ENCODE measurements at regions of chr20 and their contacts with region 1.

Region 1: DNA sequence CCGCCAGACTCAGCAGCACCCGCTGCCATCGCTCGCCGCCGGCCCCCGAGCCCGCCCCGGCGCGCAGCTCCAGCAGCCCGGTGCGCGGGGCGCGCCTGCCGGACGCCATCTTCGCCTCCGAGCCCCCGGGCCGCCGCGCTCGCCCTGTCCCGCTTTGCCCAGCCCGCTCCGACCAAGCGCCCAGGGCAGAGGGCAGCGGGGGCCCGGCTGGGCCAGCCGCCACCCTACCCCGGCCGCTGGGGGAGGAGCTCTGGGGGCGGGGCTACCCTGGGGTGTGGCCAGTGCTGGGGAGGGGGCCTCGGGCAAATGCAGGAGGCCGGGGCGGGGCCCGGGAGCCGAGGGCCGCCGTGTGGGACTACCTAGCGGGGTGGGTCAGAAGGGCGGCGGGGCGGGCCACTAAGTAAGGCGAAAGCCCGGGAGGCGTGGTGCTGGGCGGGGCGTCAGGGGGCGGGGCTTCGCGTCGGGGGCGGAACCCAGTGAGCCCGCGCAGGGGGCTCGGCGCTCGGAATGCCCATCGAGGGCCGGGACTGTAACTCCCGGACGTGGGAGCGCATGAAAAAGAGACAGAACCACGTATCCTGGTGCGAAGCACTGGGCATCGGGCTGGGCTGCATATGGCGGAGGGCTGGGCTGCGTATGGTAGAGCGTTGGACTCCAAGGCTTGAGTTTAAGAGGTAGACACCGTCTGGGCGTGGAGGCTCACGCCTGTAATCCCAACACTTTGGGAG is at the start of gene SNTA1:
- DNase-seq: peak; percentile 96 to 98 (median 98)
- ATAC-seq: peak; percentile 96
- H3K4me3 ChIP-seq: peak within 1 kb of the TSS; percentile 78
- H3K27ac ChIP-seq: peak within 1 kb of the TSS; percentile 76
- H3K4me1 ChIP-seq: peaks cover 34 to 38% of the 10 kb centered on the region in 2 experiments; a peak in 4 of 5 replicates
- H3K27me3 ChIP-seq: no peaks in the 10 kb centered on the region
- CTCF ChIP-seq: no peak
- EP300 ChIP-seq: no peak
- POLR2A ChIP-seq: peak; percentile 44; the same call in 1 of the 2 replicates
- RAD21 ChIP-seq: no peak
- polyA plus RNA-seq, gene SNTA1: 1.2 to 2.0 TPM

Region 2: DNA sequence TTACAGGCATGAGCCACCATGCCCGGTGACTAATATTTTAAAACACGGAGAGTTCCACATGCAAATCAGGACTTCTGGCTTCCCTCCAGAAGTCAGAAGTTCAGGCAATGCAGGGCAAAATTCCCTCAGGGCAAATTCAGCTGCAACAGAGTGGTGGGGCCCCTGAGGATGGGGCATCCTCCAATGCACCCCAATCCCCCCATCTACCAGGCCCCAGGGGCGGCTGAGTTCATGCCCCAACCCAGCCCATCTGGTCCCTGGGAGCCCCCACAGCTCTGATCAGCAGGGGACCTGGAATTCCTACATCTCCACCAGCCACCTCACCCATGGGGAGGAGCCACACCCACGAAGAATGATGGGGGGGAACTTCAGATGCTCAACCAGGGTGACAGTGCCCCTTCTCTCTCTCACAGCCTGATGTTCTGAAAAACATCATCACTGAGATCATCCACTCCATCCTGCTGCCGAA is 138.1 kb before region 1 on chr20:
- CTCF ChIA-PET with region 1: no interaction called
- POLR2A ChIA-PET with region 1: no interaction called
- in situ Hi-C with region 1: no loop called
- intact Hi-C with region 1: no loop called
- DNase-seq: no peak
- ATAC-seq: no peak
- H3K4me3 ChIP-seq: no peak overlapping the region
- H3K27ac ChIP-seq: no peak overlapping the region
- H3K4me1 ChIP-seq: no peaks in the 10 kb centered on the region
- H3K27me3 ChIP-seq: peaks cover 8 to 48% of the 10 kb centered on the region in 2 experiments; a peak in 4 of 5 replicates
- CTCF ChIP-seq: no peak
- EP300 ChIP-seq: no peak
- POLR2A ChIP-seq: no peak
- RAD21 ChIP-seq: no peak

Region 3: DNA sequence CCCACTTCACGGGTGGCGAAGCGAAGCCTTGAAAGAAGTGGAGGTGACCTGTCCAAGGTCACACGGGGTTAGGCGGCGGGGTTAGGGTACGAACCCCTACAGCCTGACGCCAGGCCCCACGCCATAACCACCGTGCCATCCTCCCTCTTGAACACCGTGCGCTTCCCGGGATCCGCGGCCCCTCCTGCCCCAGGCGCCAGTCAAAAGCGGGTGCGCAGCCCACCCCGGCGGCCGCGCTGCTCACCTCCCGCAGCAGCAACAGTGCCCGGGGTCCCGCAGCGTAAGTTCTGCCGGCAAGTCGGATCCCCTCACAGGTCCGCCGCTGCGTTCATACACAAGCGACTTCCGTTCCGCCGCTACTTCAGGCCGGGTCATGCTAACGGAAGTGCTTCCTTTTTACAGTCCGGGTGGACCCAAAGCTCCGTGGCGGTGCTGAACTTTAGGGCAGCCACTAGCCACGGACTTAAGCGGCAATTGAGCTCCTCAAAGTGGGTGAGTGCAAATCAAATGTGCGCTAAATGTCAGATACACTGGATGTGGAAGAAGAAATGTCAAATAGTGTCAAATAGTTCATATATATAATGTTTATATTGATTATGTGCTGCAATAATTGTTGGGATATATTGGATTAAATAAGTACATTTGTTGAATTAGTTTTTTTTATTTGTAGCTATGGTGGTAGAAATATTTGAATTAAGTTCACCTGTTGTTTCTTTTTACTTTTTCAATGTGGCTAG is 42.3 kb before region 1 on chr20 and contains the start of gene CDK5RAP1:
- CTCF ChIA-PET with region 1: no interaction called
- POLR2A ChIA-PET with region 1: no interaction called
- in situ Hi-C with region 1: no loop called
- intact Hi-C with region 1: loop called (anchors 5 kb)
- DNase-seq: peak; percentile 84 to 96 (median 86)
- ATAC-seq: peak; percentile 95
- H3K4me3 ChIP-seq: peak within 1 kb of the TSS; percentile 88
- H3K27ac ChIP-seq: peak within 1 kb of the TSS; percentile 75
- H3K4me1 ChIP-seq: peaks cover 10 to 14% of the 10 kb centered on the region in 2 experiments
- H3K27me3 ChIP-seq: no peaks in the 10 kb centered on the region
- CTCF ChIP-seq: no peak
- EP300 ChIP-seq: peak; percentile 20; the same call in 1 of the 2 replicates
- POLR2A ChIP-seq: peak; percentile 90
- RAD21 ChIP-seq: peak in 1 of 2 experiments; percentile 4; a peak in 1 of 4 replicates
- polyA plus RNA-seq, gene CDK5RAP1: 116 to 127 TPM

Region 4: DNA sequence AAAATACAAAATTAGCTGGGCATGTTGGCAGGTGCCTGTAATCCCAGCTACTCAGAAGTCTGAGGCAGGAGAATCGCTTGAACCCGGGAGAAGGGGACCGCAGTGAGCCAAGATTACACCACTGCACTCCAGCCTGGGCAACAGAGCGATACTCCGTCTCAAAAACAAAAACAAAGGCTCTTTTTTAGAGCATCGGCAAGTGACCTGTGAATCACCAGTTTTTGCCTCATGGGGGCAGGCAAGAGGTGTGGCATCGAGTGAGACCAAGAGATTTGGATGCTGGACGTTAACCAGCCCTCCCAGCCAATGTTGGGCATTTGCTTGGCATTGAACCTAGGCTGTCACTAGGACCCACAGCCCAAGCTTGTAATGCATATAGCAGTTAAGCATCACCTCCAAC is 27.7 kb before region 1 on chr20:
- CTCF ChIA-PET with region 1: no interaction called
- POLR2A ChIA-PET with region 1: interaction called, 6 read pairs
- in situ Hi-C with region 1: no loop called
- intact Hi-C with region 1: loop called (anchors 2 kb)
- DNase-seq: peak in 3 of 4 experiments; percentile 38 to 63 (median 47)
- ATAC-seq: peak; percentile 50
- H3K4me3 ChIP-seq: no peak overlapping the region
- H3K27ac ChIP-seq: no peak overlapping the region
- H3K4me1 ChIP-seq: peaks cover 25 to 26% of the 10 kb centered on the region in 2 experiments; a peak in 4 of 5 replicates
- H3K27me3 ChIP-seq: no peaks in the 10 kb centered on the region
- CTCF ChIP-seq: peak; percentile 66 to 70 (median 69)
- EP300 ChIP-seq: no peak
- POLR2A ChIP-seq: no peak
- RAD21 ChIP-seq: peak; percentile 45 to 76

Region 5: GRCh38 chr20:33584976-33585375 is 141.3 kb after region 1 on chr20:
- CTCF ChIA-PET with region 1: no interaction called
- POLR2A ChIA-PET with region 1: no interaction called
- in situ Hi-C with region 1: no loop called
- intact Hi-C with region 1: no loop called
- DNase-seq: no peak
- ATAC-seq: no peak
- H3K4me3 ChIP-seq: no peak overlapping the region
- H3K27ac ChIP-seq: no peak overlapping the region
- H3K4me1 ChIP-seq: no peaks in the 10 kb centered on the region
- H3K27me3 ChIP-seq: no peaks in the 10 kb centered on the region
- CTCF ChIP-seq: no peak
- EP300 ChIP-seq: no peak
- POLR2A ChIP-seq: no peak
- RAD21 ChIP-seq: no peak